T-cell (primary cell): ENCODE measurements at regions of chr1 and their contacts with region 1.

Region 1: DNA sequence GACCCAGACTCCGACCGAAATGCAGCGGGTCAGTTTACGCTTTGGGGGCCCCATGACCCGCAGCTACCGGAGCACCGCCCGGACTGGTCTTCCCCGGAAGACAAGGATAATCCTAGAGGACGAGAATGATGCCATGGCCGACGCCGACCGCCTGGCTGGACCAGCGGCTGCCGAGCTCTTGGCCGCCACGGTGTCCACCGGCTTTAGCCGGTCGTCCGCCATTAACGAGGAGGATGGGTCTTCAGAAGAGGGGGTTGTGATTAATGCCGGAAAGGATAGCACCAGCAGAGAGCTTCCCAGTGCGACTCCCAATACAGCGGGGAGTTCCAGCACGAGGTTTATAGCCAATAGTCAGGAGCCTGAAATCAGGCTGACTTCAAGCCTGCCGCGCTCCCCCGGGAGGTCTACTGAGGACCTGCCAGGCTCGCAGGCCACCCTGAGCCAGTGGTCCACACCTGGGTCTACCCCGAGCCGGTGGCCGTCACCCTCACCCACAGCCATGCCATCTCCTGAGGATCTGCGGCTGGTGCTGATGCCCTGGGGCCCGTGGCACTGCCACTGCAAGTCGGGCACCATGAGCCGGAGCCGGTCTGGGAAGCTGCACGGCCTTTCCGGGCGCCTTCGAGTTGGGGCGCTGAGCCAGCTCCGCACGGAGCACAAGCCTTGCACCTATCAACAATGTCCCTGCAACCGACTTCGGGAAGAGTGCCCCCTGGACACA is 534 bp downstream of the C1orf56 start:
- DNase-seq: peak in 33 of 35 experiments; percentile 32 to 79 (median 50)
- ATAC-seq: peak; percentile 61 to 79 (median 64)
- H3K4me3 ChIP-seq: peak overlapping the region; percentile 75 to 95
- H3K4me3 Mint-ChIP-seq: peak overlapping the region; percentile 88 to 92 (median 89)
- H3K27ac ChIP-seq: peak overlapping the region; percentile 72
- H3K27ac Mint-ChIP-seq: peak overlapping the region; percentile 96
- H3K4me1 ChIP-seq: peaks cover 20 to 41% of the 10 kb centered on the region in 2 experiments
- H3K4me1 Mint-ChIP-seq: peaks cover 70 to 78% (median 73%) of the 10 kb centered on the region in 3 donors
- H3K27me3 ChIP-seq: no peaks in the 10 kb centered on the region
- H3K27me3 Mint-ChIP-seq: no peaks in the 10 kb centered on the region

Region 2: GRCh38 chr1:150906341-150906740 is 141.7 kb before region 1 on chr1:
- CTCF ChIA-PET with region 1: interaction called in 1 of 2 experiments, 10 read pairs
- POLR2A ChIA-PET with region 1: no interaction called
- DNase-seq: no peak
- ATAC-seq: no peak
- H3K4me3 ChIP-seq: no peak overlapping the region
- H3K4me3 Mint-ChIP-seq: no peak overlapping the region
- H3K27ac ChIP-seq: no peak overlapping the region
- H3K27ac Mint-ChIP-seq: no peak overlapping the region
- H3K4me1 ChIP-seq: no peaks in the 10 kb centered on the region
- H3K4me1 Mint-ChIP-seq: peaks cover 0 to 3% (median 0%) of the 10 kb centered on the region in 3 donors
- H3K27me3 ChIP-seq: no peaks in the 10 kb centered on the region
- H3K27me3 Mint-ChIP-seq: no peaks in the 10 kb centered on the region

Region 3: DNA sequence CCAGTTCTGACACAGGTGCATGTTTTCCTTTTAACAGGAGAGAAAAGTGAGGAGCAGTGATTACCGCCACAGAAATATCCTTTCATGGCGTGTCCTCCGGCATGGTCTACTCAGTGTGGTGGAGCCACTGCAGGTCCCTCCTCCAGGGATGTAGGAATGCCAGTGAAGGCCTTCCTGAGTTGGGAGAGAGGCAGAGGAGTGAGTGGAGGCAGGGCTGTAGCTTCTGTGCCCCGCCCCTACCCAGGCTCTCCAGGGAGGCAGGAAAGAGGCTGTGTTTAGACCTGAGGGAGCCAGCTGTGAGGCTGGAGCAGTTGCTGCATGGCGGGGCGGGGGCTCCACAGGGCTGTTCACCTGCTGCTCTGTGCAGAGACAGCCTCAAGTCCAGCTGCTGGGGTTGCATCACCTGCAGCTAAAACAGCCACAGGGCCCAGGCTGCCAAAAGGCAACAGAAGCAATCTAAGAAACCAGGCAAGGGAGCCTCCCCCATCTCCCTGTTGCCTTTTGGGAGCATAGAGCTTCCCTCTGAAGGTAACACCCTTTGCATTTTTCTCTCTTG is 66.9 kb before region 1 on chr1:
- CTCF ChIA-PET with region 1: no interaction called
- POLR2A ChIA-PET with region 1: no interaction called
- DNase-seq: no peak
- ATAC-seq: no peak
- H3K4me3 ChIP-seq: no peak overlapping the region
- H3K4me3 Mint-ChIP-seq: no peak overlapping the region
- H3K27ac ChIP-seq: no peak overlapping the region
- H3K27ac Mint-ChIP-seq: no peak overlapping the region
- H3K4me1 ChIP-seq: peaks cover 12 to 33% of the 10 kb centered on the region in 2 experiments
- H3K4me1 Mint-ChIP-seq: peaks cover 29 to 43% (median 31%) of the 10 kb centered on the region in 3 donors
- H3K27me3 ChIP-seq: peaks cover 0 to 8% of the 10 kb centered on the region in 2 experiments
- H3K27me3 Mint-ChIP-seq: no peaks in the 10 kb centered on the region

Region 4: GRCh38 chr1:151013518-151013917 is 34.6 kb before region 1 on chr1:
- CTCF ChIA-PET with region 1: no interaction called
- POLR2A ChIA-PET with region 1: no interaction called
- DNase-seq: no peak
- ATAC-seq: no peak
- H3K4me3 ChIP-seq: no peak overlapping the region
- H3K4me3 Mint-ChIP-seq: no peak overlapping the region
- H3K27ac ChIP-seq: no peak overlapping the region
- H3K27ac Mint-ChIP-seq: peak overlapping the region in 1 of 2 donors; percentile 44
- H3K4me1 ChIP-seq: peaks cover 23 to 34% of the 10 kb centered on the region in 2 experiments
- H3K4me1 Mint-ChIP-seq: peaks cover 34 to 44% (median 41%) of the 10 kb centered on the region in 3 donors
- H3K27me3 ChIP-seq: no peaks in the 10 kb centered on the region
- H3K27me3 Mint-ChIP-seq: no peaks in the 10 kb centered on the region

Region 5: GRCh38 chr1:151070474-151071276 is 22.6 kb after region 1 on chr1 and contains the start of gene GABPB2:
- CTCF ChIA-PET with region 1: interaction called, 3 to 6 read pairs
- POLR2A ChIA-PET with region 1: interaction called in 1 of 2 experiments, 11 read pairs
- DNase-seq: peak; percentile 68 to 93 (median 79)
- ATAC-seq: peak; percentile 81 to 85 (median 82)
- H3K4me3 ChIP-seq: peak within 1 kb of the TSS; percentile 87 to 98
- H3K4me3 Mint-ChIP-seq: peak within 1 kb of the TSS; percentile 94 to 97 (median 96)
- H3K27ac ChIP-seq: peak within 1 kb of the TSS; percentile 94
- H3K27ac Mint-ChIP-seq: peak within 1 kb of the TSS; percentile 100
- H3K4me1 ChIP-seq: peaks cover 3 to 24% of the 10 kb centered on the region in 2 experiments
- H3K4me1 Mint-ChIP-seq: peaks cover 24 to 30% (median 28%) of the 10 kb centered on the region in 3 donors
- H3K27me3 ChIP-seq: no peaks in the 10 kb centered on the region
- H3K27me3 Mint-ChIP-seq: no peaks in the 10 kb centered on the region
- total RNA-seq, gene GABPB2: 29.6 to 41.3 (median 32.5) TPM

Region 6: DNA sequence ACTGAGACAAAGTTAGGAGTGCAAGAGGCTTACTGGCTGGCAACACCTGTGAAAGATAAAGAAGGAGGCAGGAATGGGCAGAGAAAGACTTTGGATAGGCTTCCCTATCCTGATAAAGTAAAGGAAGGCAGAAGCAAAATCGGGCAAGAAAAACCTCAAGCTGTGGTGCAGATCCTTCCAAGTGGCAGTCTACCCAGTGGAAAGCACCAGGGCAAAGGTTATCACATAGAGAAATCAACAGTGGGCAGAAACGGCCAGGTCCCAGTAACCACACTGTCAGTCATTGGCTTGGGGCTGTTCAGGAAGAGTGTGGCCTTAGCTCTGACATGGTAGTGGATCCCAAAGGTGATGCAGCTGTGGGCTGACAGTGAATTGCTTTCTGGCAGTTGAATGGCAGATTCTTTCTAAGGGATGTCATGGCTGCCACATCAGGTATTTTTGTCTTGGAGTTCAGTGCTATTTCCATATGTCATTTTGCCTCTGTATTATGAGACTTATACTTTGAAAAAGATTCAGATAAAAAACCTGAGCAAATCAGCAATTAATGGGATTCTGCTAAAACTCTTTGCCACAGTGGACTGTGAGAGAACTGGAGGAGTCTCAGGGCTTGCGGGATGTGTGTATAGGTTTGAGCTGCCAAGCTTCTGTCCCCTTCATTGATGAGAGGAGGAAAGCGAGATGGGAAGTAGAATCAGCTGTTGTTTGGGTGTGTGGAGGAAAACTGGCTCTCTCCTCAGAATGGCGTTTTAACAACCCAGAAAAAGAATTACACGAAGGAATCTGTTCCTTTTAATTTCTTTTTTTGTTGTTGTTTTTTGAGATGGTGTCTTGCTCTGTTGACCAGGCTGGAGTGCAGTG is 455.1 kb after region 1 on chr1:
- CTCF ChIA-PET with region 1: no interaction called
- POLR2A ChIA-PET with region 1: no interaction called
- DNase-seq: no peak
- ATAC-seq: no peak
- H3K4me3 ChIP-seq: no peak overlapping the region
- H3K4me3 Mint-ChIP-seq: no peak overlapping the region
- H3K27ac ChIP-seq: no peak overlapping the region
- H3K27ac Mint-ChIP-seq: no peak overlapping the region
- H3K4me1 ChIP-seq: no peaks in the 10 kb centered on the region
- H3K4me1 Mint-ChIP-seq: no peaks in the 10 kb centered on the region
- H3K27me3 ChIP-seq: no peaks in the 10 kb centered on the region
- H3K27me3 Mint-ChIP-seq: peaks cover 0 to 3% of the 10 kb centered on the region in 2 donors